ENCODE measurements at regions of chr15 and their contacts with region 1.

Region 1: DNA sequence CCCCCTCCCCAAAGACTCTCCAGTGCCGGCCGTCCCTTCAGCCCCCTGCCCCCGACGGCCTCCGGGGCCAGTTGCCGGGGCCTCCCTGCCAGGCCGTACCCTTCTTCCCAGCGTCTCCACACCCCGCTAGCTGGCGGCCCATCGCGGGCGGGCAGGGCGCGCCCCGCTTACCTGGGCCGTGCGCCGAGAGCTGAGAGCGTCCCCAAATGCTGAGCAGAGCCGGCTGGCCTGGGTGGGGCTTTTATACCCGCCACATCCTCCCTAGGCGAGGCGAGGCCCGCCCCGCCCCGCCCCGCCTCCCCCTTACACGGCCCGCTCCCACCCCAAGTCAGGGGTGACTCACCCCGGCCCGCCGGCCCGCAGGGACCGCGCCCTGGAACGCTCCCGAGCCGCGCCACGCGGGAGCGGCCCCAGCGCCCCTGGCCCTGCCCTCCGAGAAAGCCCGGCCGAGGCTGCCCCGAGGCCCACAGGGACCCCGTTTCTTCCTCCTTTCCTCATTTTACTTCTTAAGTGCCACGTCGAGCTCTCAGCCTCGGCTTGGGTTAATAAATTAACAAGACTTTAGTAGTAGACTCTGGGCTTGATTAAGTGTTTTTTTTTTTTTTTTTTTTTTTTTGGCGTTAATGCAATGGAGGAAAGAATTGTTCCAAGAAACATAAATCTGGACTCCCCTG is at the start of gene ANXA2:
- DNase-seq: peak; percentile 91
- ATAC-seq: peak; percentile 86
- H3K4me3 Mint-ChIP-seq: peak within 1 kb of the TSS; percentile 94
- H3K27ac Mint-ChIP-seq: peak within 1 kb of the TSS; percentile 97
- H3K4me1 Mint-ChIP-seq: peaks cover 53% of the 10 kb centered on the region
- H3K27me3 Mint-ChIP-seq: peaks cover 6% of the 10 kb centered on the region
- total RNA-seq, gene ANXA2: 368 to 375 TPM

Region 2: DNA sequence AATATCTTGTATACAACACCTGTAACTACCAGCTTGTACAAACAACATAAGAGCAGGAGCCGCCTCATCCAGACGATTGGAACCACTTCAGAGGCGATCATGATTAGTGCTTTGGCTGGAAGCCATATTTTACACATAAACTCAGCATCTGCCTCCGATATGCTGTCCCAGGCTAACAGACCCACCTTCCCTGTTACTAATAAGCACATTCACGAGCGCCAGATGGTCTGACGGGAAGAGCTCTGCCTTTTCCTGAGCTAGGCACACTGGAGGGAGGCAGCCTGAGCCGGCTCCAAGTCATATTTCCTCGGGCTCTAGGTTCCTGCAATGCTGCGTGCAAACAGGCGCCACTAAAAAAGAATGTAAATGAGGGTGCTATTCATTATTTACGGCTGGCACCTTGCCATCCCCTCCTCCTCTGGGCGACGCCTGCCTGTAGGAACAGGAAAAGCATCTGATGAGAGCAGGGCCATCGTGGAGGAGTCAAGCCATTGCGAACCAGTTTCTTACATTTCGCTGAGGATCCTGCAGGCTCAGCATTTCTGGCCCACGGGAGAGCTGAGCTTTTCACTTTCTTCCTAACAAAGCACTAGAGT is 98.4 kb before region 1 on chr15:
- CTCF ChIA-PET with region 1: no interaction called
- POLR2A ChIA-PET with region 1: no interaction called
- DNase-seq: no peak
- ATAC-seq: no peak
- H3K4me3 Mint-ChIP-seq: no peak overlapping the region
- H3K27ac Mint-ChIP-seq: no peak overlapping the region
- H3K4me1 Mint-ChIP-seq: no peaks in the 10 kb centered on the region
- H3K27me3 Mint-ChIP-seq: peaks cover 2% of the 10 kb centered on the region

Region 3: GRCh38 chr15:60362321-60363086 is 35.4 kb before region 1 on chr15:
- CTCF ChIA-PET with region 1: no interaction called
- POLR2A ChIA-PET with region 1: interaction called, 11 read pairs
- DNase-seq: peak; percentile 41
- ATAC-seq: peak; percentile 80
- H3K4me3 Mint-ChIP-seq: no peak overlapping the region
- H3K27ac Mint-ChIP-seq: peak overlapping the region; percentile 35
- H3K4me1 Mint-ChIP-seq: peaks cover 26% of the 10 kb centered on the region
- H3K27me3 Mint-ChIP-seq: no peaks in the 10 kb centered on the region

Region 4: DNA sequence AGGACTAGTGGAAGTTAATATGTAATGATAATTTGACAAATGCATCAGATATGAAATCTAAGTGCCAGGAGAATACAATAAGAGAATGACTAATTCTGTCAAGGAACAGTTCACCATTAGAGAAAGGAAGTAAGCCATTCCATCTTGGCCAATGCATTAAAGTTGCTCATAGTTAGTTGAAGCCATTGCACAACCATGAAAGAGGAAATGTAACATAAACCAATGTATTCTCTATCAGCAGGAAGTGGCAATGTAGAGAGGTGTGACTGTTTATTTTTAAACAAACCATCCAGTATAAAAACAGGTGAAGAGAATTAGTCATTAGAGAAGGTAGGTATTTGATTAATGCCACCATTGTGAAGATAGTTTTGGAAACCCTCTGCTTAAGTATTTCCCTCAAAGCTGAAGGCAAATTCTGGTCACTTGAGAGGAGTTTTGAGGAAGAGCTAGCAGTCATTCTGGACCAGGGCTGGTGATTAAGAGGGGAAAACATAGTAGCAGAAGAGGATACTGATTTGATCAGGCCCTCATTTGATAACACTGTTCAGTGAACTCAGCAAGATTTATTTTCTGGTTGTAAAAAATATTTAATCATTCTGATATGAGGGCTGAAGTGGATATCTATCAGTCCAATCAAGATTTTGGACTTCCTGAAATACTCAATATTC is 10.7 kb after region 1 on chr15:
- CTCF ChIA-PET with region 1: interaction called, 3 read pairs
- POLR2A ChIA-PET with region 1: interaction called, 20 read pairs
- DNase-seq: no peak
- ATAC-seq: peak; percentile 84
- H3K4me3 Mint-ChIP-seq: peak overlapping the region; percentile 3
- H3K27ac Mint-ChIP-seq: peak overlapping the region; percentile 81
- H3K4me1 Mint-ChIP-seq: peaks cover 21% of the 10 kb centered on the region
- H3K27me3 Mint-ChIP-seq: peaks cover 2% of the 10 kb centered on the region

Region 5: DNA sequence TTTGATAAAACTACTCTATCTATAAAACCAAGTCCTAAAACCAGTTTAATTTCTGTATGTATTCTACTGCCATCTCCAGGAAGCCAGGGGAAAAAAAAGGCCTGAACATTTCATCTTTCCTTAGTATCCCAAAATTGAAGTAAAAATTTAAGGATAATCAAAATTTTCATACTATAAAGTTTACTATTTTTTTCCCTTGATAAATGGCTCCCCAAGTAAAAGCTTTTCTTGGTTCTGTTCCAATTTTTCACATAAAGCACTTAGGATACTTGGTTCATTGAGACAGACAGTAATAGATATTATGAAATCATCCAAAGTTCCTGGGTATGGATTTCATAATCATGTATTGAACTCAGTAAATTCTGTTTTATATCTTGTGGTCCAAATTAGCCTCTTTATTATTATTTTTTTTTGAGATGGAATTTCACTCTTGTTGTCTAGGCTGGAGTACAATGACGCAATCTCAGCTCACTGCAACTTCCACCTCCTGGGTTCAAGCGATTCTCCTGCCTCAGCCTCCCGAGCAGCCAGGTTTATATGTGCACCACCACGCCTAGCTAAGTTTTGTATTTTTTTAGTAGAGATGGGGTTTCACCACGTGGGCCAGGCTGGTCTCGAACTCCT is 46.5 kb after region 1 on chr15:
- CTCF ChIA-PET with region 1: interaction called, 3 read pairs
- POLR2A ChIA-PET with region 1: interaction called, 11 read pairs
- DNase-seq: no peak
- ATAC-seq: no peak
- H3K4me3 Mint-ChIP-seq: no peak overlapping the region
- H3K27ac Mint-ChIP-seq: no peak overlapping the region
- H3K4me1 Mint-ChIP-seq: peaks cover 8% of the 10 kb centered on the region
- H3K27me3 Mint-ChIP-seq: no peaks in the 10 kb centered on the region

Region 6: DNA sequence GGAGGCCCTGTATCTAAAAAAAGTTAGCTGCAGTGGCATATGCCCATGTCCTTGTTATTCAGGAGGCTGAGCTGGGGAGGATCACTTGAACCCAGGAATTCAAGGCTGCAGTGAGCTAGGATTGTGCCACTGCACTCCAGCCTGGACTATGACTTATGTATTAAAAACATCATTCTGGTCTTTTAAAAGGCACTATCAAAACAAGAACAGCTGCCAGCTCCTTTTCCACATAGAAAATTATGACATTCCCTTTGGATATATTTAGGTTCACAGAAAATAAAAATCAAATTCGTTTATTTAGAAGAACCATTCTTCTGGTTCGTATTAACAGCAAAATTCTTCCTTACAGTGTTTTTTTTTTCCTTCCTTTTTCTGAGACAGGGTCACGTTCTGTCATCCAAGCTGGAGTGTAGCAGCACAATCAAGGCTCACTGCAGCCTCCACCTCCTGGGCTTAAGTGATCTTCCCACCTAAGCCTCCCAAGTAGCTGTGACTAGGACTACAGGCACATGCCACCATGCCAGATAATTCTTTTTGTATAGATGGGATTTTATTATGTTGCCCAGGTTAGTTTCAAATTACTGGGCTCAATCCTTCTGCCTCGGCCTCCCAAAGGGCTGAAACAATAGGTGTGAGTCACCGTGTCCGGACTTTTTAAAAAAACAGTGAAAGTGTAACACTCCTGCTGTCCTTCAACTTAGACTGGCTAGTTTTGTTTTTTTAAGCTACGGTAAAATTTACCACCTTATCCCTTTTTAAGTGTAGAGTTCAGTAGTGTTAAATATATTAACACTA is 67.1 kb after region 1 on chr15:
- CTCF ChIA-PET with region 1: no interaction called
- POLR2A ChIA-PET with region 1: no interaction called
- DNase-seq: no peak
- ATAC-seq: no peak
- H3K4me3 Mint-ChIP-seq: no peak overlapping the region
- H3K27ac Mint-ChIP-seq: no peak overlapping the region
- H3K4me1 Mint-ChIP-seq: peaks cover 10% of the 10 kb centered on the region
- H3K27me3 Mint-ChIP-seq: no peaks in the 10 kb centered on the region

Region 7: DNA sequence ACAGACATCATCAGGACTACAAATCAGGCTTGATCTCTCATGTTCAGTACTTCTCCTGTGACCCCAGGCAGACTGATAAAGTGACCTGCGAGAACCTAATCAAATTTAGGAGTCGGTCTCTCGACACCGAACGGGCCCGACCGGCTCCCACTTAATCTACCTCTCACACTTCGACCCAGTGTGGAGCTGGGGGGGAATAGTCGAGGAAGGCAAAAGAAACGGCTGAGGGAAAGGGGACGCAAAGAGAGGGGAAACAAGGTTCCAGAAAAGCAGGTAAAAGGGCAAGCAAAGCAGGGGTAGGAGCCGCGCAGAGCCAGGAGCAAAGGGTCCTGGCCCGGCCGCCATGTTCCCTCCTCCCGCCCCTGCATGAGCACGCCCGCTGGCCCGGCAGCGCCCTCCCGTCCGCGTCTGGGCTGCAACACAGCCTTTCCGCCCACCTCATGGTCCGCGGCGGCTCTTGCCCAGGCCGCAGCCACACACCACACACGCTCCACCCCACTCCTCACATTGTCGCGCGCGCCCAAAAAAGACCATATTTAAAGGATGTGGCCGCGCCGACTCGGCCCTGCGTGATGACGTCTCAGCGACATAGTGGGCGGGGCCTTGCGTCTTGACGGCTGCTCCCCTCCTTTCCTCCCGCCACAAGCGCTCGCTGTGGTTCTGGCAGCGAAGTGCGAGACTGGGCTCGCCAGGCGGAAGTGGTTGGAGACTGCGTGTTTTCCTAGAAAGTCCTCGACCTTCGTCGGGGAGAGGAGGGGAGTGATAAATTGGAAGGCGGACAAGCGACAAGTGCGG is 80.9 kb after region 1 on chr15 and contains the start of gene ICE2:
- CTCF ChIA-PET with region 1: no interaction called
- POLR2A ChIA-PET with region 1: interaction called, 13 read pairs
- DNase-seq: peak; percentile 98
- ATAC-seq: peak; percentile 87
- H3K4me3 Mint-ChIP-seq: peak within 1 kb of the TSS; percentile 89
- H3K27ac Mint-ChIP-seq: peak within 1 kb of the TSS; percentile 98
- H3K4me1 Mint-ChIP-seq: peaks cover 66% of the 10 kb centered on the region
- H3K27me3 Mint-ChIP-seq: no peaks in the 10 kb centered on the region
- total RNA-seq, gene ICE2: 71.4 to 76.3 TPM